HCT116 (cell line): ENCODE measurements at regions of chr1 and their contacts with region 1.

Region 1: DNA sequence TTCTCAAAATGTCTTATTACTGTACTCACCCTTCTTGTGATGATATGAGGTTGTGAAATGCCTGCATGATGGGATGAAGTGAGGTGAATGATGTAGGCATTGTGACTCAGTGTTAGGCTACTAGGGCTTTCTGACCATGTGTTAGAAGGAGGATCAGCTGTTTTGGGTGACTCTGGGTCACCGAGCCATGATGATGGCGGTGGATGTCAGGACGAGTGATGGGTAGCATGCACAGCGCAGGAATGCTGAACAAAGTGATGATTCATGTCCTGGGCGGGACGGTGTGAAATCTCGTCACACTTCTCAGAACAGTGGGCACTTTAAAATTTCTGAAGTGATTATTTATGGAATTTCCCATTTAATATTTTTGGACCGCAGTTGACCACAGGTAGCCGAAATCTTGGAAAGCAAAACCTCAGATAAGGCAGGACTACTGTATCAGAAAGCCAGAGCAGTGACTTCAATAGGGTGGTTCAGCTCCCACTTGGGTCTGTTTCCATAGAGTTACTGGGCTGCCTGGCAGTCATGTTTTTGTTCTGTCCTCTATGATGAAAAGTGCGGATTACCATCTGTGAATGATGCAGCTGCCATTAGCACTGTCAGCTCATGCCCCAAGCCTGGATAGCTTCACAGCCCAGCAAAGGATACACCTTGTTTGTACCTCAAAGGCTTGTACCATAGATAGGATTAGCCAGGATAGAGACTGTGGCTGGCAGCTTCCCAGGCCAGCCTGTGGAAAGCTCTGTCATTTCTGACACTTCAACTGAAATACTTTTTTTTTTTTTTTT is 26.6 kb downstream of the IL6R start:
- DNase-seq: no peak
- ATAC-seq: peak; percentile 37; the same call in 1 of the 2 replicates
- H3K4me3 ChIP-seq: no peak overlapping the region
- H3K27ac ChIP-seq: peak overlapping the region; percentile 18; the same call in 1 of the 2 replicates
- H3K4me1 ChIP-seq: peaks cover 44 to 61% of the 10 kb centered on the region in 2 experiments
- H3K27me3 ChIP-seq: no peaks in the 10 kb centered on the region
- CTCF ChIP-seq: no peak
- POLR2A ChIP-seq: no peak
- RAD21 ChIP-seq: no peak

Region 2: DNA sequence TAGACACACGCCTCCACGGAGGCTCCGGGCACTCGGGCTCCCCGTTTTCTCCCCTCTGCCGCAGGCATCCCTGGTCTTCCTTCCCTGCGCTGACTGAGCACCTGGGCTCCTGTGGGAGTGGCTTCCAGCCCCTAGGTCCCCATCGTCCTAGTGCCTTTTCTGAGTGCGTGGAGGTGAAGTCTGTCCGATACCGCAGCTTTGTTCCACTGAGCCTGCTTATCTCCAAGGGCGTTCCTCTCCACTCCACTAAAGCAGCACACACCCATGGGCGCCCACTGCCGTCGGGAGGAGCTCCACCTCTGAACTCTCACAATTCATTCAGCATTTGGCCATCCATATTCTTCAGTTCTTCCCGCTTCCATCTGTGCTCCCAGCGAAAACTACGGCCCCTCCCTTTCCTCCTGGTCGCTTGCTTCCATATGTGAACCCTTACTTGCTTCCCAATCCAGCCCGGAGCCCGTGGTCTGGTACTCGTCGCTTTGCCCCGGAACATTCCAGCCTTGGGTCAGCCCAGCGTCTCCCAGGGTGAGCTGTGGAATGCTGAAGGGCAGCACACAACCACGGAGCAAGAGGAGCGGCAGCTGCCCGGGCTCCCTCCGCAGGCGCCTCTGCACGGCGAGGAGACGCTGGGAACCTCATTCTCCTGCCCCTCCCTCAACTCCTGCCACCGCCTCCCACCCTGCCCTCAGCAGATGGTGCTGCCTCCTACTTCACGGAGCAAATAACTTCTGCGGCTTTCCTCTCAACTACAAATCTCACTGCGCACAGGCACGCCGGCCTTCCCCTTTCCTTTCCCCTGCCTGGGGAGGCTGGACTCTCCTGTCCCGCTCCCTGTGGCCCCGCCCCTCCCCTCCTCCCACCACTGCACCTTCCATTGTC is 79.0 kb before region 1 on chr1:
- CTCF ChIA-PET with region 1: no interaction called
- POLR2A ChIA-PET with region 1: no interaction called
- RAD21 ChIA-PET with region 1: no interaction called
- intact Hi-C with region 1: loop called (anchors 5 kb)
- DNase-seq: no peak
- ATAC-seq: peak; percentile 76
- H3K4me3 ChIP-seq: peak overlapping the region; percentile 45 to 57
- H3K27ac ChIP-seq: peak overlapping the region; percentile 72
- H3K4me1 ChIP-seq: peaks cover 21 to 25% of the 10 kb centered on the region in 2 experiments
- H3K27me3 ChIP-seq: no peaks in the 10 kb centered on the region
- CTCF ChIP-seq: no peak
- POLR2A ChIP-seq: no peak
- RAD21 ChIP-seq: no peak

Region 3: GRCh38 chr1:154404984-154405761 is 26.6 kb before region 1 on chr1 and contains the start of gene IL6R:
- CTCF ChIA-PET with region 1: no interaction called
- POLR2A ChIA-PET with region 1: no interaction called
- RAD21 ChIA-PET with region 1: no interaction called
- intact Hi-C with region 1: loop called (anchors 2 kb)
- DNase-seq: peak; percentile 82
- ATAC-seq: peak; percentile 82
- H3K4me3 ChIP-seq: peak within 1 kb of the TSS; percentile 61 to 65
- H3K27ac ChIP-seq: peak within 1 kb of the TSS; percentile 69
- H3K4me1 ChIP-seq: peaks cover 30 to 36% of the 10 kb centered on the region in 2 experiments
- H3K27me3 ChIP-seq: no peaks in the 10 kb centered on the region; the same call in 1 of the 2 replicates
- CTCF ChIP-seq: peak; percentile 45 to 91 (median 55); a peak in 5 of 6 replicates
- POLR2A ChIP-seq: no peak
- RAD21 ChIP-seq: peak; percentile 91
- total RNA-seq, gene IL6R: 6.8 TPM

Region 4: DNA sequence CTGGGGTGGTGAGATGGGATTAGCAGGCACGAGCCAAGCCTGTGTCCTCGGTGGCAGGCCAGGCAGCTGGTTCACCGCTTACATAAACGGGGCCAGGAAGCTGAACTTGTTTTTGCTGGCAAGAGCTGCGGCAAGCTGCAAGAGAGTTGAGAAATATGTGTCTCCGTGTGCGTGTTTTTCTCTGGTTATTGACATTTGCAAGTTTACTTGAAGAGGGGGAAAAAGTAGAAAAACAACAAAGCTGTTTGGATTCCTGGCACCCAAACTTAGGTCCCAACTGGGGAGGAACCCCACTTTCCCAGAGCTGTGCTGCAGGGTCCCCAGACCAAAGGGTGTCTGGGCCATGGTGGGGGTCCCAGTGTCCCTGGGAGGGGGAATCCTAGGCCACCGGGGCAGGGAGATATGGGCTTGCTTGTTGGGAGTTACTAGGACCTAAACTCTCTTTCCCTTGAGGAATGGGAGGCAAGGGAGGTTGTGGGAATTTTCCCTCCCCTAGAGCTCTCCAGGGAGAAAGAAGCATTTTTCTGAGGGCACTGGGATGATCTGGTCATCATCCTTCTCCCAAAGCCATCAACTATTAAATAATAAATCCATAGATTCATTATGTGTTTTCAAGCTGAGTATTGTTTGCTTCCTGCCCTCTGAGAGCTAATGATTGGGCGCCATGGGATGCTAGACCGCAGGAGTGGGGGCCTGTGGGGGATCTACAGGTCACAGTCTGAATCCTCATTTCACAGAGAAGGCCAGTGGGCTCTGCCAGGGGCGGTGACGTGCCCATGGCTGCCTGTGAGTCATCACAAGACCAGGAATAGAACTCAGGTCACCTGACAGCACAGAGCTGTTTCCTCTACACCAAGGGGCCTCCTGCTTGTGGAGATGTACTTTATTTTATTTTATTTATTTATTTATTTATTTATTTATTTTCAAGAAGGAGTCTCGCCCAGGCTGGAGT is 11.9 kb before region 1 on chr1:
- CTCF ChIA-PET with region 1: interaction called, 3 read pairs
- POLR2A ChIA-PET with region 1: interaction called, 7 read pairs
- RAD21 ChIA-PET with region 1: interaction called in 1 of 2 experiments, 3 read pairs
- intact Hi-C with region 1: loop called (anchors 2 kb)
- DNase-seq: no peak
- ATAC-seq: peak; percentile 17; the same call in 1 of the 2 replicates
- H3K4me3 ChIP-seq: peak overlapping the region in 1 of 2 experiments; percentile 4; a peak in 1 of 4 replicates
- H3K27ac ChIP-seq: peak overlapping the region; percentile 36; the same call in 1 of the 2 replicates
- H3K4me1 ChIP-seq: peaks cover 62 to 81% of the 10 kb centered on the region in 2 experiments
- H3K27me3 ChIP-seq: no peaks in the 10 kb centered on the region
- CTCF ChIP-seq: no peak
- POLR2A ChIP-seq: no peak
- RAD21 ChIP-seq: no peak